A549 (cell line): ENCODE measurements at regions of chr3 and their contacts with region 1.

Region 1: DNA sequence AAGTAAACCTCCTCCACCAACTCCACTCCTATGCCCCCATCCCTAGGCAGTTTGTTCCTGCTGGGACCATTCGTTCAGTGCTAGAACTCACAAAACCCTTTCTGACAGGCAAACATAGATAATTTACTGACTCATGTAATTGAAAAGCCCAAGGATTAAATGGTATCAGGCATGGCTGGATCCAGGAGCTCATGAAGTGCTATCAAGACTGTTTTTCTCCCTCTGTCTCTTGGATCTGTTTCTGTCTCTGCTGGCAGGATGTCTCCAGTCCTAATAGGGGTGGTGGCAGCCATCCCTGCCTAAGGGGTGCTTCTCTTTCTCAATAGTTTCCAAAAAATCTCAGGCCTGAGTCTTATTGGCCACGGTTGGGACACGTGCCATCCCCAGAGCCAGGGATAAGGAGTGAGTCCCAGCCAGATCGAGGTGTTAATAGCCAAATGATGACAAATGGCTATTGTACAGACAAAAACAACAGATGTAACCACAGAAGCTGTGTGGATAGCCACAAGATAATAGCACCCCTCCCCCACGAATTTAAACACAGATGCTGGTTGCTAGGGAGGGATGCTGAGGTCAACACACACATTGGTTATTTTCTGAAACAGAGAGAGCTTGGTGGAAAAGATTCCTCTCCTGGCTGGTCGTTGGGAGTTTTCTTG is 168.6 kb downstream of the SHQ1 start:
- DNase-seq: no peak
- ATAC-seq: no peak
- H3K4me3 ChIP-seq: no peak overlapping the region
- H3K27ac ChIP-seq: no peak overlapping the region
- H3K4me1 ChIP-seq: no peaks in the 10 kb centered on the region
- CTCF ChIP-seq: no peak
- EP300 ChIP-seq: no peak
- POLR2A ChIP-seq: no peak
- RAD21 ChIP-seq: no peak

Region 2: DNA sequence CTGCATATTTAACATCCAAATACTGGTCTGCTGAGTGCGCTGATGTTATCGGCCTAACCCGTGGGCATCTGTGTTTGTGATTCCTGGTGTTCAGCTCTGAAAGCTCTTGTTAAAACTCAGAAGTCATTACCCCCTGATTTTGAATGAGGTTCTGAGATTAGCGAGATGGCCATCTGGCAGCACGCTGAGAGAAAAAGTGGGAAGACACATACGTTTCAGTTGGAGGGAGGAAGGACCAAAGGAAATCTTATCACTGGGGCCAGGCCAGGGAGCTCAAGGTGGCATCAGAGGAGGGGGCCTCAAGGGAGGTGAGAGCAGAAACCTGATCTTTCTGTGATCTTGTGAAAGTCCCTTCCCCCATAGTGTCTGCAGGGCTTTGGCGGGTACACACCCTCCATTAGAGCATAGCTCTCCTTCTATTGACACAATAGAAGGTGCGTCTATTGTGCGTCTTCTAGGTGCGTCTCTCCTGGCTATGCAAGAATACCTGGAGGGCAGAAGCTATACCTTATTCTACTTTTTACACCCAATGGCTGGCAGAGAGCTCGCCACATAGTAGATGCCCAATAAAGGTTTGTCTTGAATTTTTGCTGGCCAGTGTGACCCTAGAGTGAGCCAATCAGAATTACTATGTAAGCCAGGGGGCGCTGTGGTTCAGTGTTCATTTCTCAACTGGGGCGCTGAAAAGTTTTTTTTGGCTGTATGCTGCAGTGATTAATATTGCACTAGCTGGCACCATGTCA is 13.8 kb before region 1 on chr3:
- CTCF ChIA-PET with region 1: interaction called, 17 read pairs
- POLR2A ChIA-PET with region 1: no interaction called
- DNase-seq: peak; percentile 35 to 47
- ATAC-seq: peak; percentile 49 to 83; a peak in 3 of 6 replicates
- H3K4me3 ChIP-seq: no peak overlapping the region
- H3K27ac ChIP-seq: no peak overlapping the region
- H3K4me1 ChIP-seq: peaks cover 7% of the 10 kb centered on the region
- CTCF ChIP-seq: peak; percentile 58
- EP300 ChIP-seq: no peak
- POLR2A ChIP-seq: no peak
- RAD21 ChIP-seq: peak; percentile 51 to 55; a peak in 4 of 5 replicates